ENCODE measurements at regions of chr6 and their contacts with region 1.

Region 1: DNA sequence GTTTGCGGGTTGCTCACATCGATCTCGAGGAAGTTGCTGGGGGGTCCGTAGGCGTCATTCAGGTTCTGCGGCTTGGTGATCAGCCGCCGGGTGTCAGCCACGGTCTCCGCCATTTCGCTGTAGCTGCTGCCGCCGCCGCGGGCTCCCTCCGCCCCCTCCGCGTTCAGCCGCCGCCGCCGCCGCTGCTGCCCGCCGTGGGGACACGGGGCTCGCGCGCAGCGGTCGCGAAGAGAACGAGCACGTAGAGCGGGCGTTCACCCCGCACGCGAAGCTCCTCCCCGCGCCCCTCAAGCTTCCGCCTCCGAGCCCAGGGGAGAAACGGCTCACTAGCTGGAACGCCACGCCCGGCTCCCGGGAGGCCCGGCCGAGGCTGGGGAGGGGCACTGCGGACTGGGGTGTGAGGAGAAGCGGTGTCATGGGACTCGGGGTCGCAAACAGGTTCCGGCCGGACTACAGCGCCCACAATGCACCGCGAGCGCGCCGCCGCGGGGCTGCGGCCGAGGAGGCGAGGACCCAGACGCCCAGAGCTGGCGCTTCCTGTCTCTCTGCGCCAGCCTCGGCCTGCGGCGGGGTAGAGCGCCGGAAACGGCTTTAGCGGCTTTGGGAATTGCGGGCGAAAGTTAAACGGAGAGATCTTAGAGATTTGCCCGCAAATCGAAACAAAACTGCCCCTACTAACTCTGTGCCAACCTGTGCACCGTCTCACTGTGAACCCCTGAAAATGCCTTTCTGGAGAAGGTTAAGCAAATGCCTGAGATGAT is at the start of gene SNX3:
- DNase-seq: peak; percentile 90
- H3K4me3 Mint-ChIP-seq: peak within 1 kb of the TSS; percentile 77
- H3K27ac Mint-ChIP-seq: peak within 1 kb of the TSS; percentile 89
- H3K4me1 Mint-ChIP-seq: peaks cover 19% of the 10 kb centered on the region
- H3K27me3 Mint-ChIP-seq: no peaks in the 10 kb centered on the region
- total RNA-seq, gene SNX3: 59.9 to 65.7 TPM

Region 2: DNA sequence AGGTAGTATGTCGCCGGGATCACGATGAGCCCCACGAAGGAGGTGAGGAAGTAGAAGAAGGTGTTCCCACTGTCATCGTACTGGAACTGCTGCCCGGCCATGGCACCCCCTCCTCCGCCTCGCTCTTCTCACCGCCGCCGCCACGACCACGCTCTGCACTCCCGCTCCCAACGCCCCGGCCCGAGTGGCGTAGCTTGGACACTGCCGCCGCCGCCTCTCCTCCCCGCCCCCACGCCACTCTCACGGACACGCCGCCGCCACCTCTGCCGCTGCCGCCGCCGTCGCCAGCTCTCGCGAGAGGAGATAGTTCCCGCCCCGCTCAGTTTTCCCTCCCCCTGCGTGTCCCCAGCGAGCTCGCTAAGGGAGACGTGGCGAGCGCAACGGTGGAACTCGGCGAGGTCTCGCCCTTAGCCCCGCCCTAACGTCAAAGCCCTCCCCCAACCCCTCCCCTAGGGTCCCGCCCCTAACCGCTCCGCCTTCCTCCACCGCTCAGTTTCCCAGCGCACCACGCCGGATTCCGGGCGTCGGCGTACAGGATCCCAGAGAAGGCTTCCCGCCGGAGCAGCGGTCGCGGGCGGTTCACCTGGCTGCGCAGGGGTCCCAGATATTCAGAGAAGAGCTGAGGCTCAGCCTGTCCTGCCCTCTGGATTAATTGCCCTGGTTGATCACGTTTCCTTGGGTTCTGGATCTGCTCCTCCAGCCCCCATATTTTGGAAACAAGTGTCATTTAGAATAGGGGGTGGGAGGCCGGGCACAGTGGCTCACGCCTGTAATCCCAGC is 302.9 kb before region 1 on chr6 and contains the start of gene SEC63:
- CTCF ChIA-PET with region 1: no interaction called
- intact Hi-C with region 1: loop called (anchors 1 kb)
- DNase-seq: peak; percentile 98
- H3K4me3 Mint-ChIP-seq: peak within 1 kb of the TSS; percentile 97
- H3K27ac Mint-ChIP-seq: peak within 1 kb of the TSS; percentile 94
- H3K4me1 Mint-ChIP-seq: peaks cover 32% of the 10 kb centered on the region
- H3K27me3 Mint-ChIP-seq: no peaks in the 10 kb centered on the region
- total RNA-seq, gene SEC63: 78.3 to 86.5 TPM

Region 3: GRCh38 chr6:108113557-108114519 is 147.2 kb before region 1 on chr6:
- CTCF ChIA-PET with region 1: interaction called, 3 read pairs
- intact Hi-C with region 1: loop called (anchors 2 kb)
- DNase-seq: no peak
- H3K4me3 Mint-ChIP-seq: peak overlapping the region; percentile 72
- H3K27ac Mint-ChIP-seq: no peak overlapping the region
- H3K4me1 Mint-ChIP-seq: peaks cover 40% of the 10 kb centered on the region
- H3K27me3 Mint-ChIP-seq: peaks cover 79% of the 10 kb centered on the region

Region 4: DNA sequence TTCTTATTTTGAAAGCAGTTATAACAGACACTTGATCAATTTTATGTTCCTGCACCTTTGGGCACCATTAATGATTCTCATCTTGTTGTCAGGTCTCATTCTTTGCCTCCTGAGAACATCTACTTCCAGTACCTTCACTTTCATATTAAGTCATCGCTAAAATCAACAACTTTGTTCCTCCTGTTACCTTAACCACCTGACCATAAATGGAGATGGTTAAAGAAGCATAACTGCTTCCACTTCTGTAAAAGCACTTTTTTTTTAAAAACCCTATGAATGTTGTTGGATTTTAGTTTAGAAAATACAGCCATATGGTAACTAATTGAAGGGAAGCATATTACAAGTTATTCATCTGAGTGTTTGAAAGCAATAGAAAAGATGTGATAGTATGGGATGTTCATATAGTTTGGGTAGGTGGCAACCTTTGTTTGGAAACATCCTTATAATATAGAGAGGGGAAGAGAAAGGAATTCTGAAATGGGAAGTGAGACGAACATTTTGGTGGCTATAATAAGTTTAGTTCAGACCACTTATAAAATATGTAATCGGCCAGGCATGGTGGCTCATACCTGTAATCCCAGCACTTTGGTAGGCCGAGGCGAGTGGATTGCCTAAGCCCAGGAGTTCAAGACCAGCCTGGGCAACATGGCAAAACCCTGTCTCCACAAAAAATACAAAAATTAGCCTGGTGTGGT is 87.8 kb after region 1 on chr6:
- CTCF ChIA-PET with region 1: interaction called, 3 read pairs
- intact Hi-C with region 1: loop called (anchors 1 kb)
- DNase-seq: no peak
- H3K4me3 Mint-ChIP-seq: no peak overlapping the region
- H3K27ac Mint-ChIP-seq: peak overlapping the region; percentile 87
- H3K4me1 Mint-ChIP-seq: peaks cover 10% of the 10 kb centered on the region
- H3K27me3 Mint-ChIP-seq: no peaks in the 10 kb centered on the region

Region 5: GRCh38 chr6:108526739-108527174 is 265.8 kb after region 1 on chr6:
- CTCF ChIA-PET with region 1: no interaction called
- intact Hi-C with region 1: loop called (anchors 10 kb)
- DNase-seq: no peak
- H3K4me3 Mint-ChIP-seq: no peak overlapping the region
- H3K27ac Mint-ChIP-seq: no peak overlapping the region
- H3K4me1 Mint-ChIP-seq: no peaks in the 10 kb centered on the region
- H3K27me3 Mint-ChIP-seq: no peaks in the 10 kb centered on the region